WTC11 (cell line): ENCODE measurements at regions of chr19 and their contacts with region 1.

Region 1: GRCh38 chr19:45730389-45731288 is at the start of gene FBXO46:
- DNase-seq: peak; percentile 97
- ATAC-seq: peak; percentile 97
- H3K4me3 Mint-ChIP-seq: peak within 1 kb of the TSS; percentile 93
- H3K27ac Mint-ChIP-seq: peak within 1 kb of the TSS; percentile 89
- H3K4me1 Mint-ChIP-seq: peaks cover 12% of the 10 kb centered on the region
- H3K27me3 Mint-ChIP-seq: peaks cover 7% of the 10 kb centered on the region; the same call in 1 of the 2 replicates
- CTCF ChIP-seq: no peak
- total RNA-seq, gene FBXO46: 40.1 to 46.3 TPM (median 43.3 TPM) in 3 replicates

Region 2: DNA sequence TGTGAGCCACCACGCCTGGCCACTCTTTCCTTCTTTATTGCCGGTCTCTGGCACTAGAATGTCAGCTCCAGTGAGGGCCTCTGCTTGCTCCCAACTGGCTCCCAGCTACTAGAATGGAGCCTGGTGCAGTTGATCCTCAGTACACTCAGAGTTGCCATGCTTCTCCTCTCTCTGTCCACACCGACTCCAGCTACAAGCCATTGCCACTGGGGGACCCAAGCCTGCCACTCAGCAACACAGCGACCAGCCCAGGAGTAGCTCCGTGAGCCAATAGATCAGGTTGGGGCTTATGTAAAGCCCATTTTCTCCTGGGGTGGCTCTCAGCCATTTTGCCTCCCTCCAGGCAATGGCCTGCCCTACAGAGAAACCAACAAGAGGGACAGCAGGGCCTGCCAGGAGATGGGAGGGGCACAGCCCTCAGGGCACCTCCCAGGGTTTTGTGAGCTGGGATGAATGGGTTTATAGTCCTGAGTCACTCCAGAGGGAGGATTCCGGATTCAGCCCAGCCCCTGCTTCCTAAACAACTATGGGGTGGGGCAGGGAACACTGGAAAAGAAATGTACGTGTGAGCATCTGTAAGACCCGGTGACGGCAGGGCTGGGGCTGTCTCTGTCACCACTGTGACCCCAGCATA is 182.5 kb before region 1 on chr19:
- CTCF ChIA-PET with region 1: no interaction called
- POLR2A ChIA-PET with region 1: no interaction called
- DNase-seq: no peak
- ATAC-seq: peak; percentile 41; the same call in 1 of the 2 replicates
- H3K4me3 Mint-ChIP-seq: no peak overlapping the region
- H3K27ac Mint-ChIP-seq: peak overlapping the region; percentile 45; the same call in 1 of the 2 replicates
- H3K4me1 Mint-ChIP-seq: peaks cover 20% of the 10 kb centered on the region
- H3K27me3 Mint-ChIP-seq: no peaks in the 10 kb centered on the region
- CTCF ChIP-seq: no peak

Region 3: DNA sequence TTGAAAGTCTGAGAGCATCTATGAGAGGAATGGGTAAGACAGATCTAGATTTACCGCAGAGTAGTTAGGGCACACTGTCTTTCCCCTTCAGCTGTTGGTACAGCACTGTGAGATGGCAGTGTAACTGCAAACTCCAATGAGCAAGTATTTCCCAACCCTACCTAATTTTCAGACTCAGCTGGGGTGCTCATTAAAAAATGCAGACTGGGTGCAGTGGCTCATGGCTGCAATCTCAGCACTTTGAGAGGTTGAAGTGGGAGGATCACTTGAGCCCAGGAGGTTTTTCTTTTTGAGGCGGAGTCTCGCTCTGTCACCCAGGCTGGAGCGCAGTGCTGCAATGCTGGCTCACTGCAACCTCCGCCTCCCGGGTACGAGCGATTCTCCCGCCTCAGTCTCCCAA is 25.5 kb before region 1 on chr19:
- CTCF ChIA-PET with region 1: no interaction called
- POLR2A ChIA-PET with region 1: no interaction called
- DNase-seq: no peak
- ATAC-seq: 0 out of 2 replicates have a peak, but pooled peaks have one; percentile 13
- H3K4me3 Mint-ChIP-seq: no peak overlapping the region
- H3K27ac Mint-ChIP-seq: no peak overlapping the region; the same call in 1 of the 2 replicates
- H3K4me1 Mint-ChIP-seq: no peaks in the 10 kb centered on the region
- H3K27me3 Mint-ChIP-seq: no peaks in the 10 kb centered on the region
- CTCF ChIP-seq: no peak

Region 4: DNA sequence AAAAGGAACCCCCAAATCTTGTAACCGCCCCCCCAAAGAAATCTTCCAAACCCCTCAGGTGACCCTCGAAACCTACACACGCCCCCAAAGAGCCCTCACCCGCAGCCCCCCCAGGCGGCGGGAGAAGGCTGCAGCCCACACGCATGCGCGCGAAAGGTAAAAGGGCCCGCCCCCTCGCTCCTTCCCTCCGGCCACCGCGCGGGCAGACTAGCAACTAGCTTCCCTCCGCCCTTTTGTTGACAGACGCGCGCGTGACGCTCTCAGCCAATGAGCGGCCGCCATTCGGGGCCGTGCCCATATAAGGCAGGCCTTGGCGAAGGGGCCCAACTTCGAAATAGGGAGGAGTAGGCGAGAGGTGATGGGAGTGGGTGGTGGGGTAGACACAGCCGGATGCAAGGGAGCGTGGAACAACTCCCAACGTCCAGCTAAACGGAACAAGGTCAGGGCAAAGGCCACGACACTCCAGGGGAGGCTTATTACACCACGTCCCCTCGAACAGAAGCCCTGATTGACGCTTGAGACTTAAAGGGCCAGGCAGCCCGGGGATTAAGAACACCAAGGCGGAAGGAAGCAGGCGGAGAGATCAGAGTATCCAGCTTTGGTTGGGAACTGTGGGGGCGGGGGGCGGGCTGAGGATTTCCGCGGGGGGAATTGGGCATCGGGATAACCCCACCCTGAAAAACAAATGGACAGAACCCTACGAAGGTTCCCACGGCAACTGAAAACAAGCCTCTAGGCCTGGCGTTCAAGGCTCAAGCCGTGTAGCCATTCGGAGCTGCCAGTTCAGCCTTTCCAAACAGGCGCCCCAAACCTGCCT is 13.3 kb before region 1 on chr19:
- CTCF ChIA-PET with region 1: interaction called, 22 read pairs
- POLR2A ChIA-PET with region 1: interaction called, 27 read pairs
- DNase-seq: peak; percentile 99
- ATAC-seq: peak; percentile 98
- H3K4me3 Mint-ChIP-seq: peak overlapping the region; percentile 97
- H3K27ac Mint-ChIP-seq: peak overlapping the region; percentile 97
- H3K4me1 Mint-ChIP-seq: peaks cover 25% of the 10 kb centered on the region
- H3K27me3 Mint-ChIP-seq: no peaks in the 10 kb centered on the region; the same call in 1 of the 2 replicates
- CTCF ChIP-seq: no peak